ENCODE measurements at regions of chr10 and their contacts with region 1.

Region 1: DNA sequence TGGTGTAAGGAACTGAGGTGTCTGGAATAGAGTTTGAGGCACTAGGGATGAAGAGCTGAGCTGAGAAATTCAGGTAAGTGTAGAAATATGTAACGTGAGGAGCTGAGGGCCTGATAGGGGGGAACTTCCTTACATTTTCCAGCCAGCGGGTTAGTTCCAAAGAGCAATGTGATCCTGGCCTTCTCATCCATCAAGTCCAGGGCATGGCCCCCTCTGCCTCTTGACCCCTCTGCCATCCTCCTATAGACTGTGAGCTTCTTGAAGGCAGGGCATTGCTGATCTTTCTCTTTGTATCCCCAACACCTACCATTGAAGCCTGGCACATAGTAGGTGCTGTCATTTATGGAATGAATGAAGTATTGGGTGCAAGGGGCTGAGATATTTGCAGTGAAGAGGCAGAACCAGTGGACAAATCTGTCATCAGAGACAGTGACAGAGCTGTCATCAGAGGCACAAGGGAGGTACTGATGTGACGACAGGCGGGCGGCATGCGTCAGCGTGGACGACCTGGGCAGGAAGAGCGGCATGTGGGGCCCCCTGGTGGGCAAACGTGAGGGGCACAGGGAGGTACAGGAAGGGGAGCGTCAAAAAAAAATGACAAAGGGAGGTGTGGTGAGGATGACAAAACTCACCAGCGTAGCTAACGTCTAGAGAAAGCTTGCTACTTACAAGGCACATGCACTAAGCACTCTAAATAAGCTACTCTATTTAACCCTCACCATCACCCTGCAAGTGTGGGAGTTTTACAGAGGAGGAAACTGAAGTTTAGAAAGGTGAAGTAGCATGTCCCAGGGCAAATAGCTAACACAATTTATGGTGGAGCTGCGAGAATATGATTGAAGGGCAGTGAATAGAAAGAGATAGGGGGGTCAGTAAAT is 5.2 kb upstream of the CAMK2G start:
- DNase-seq: no peak
- ATAC-seq: peak; percentile 94
- H3K4me3 ChIP-seq: no peak overlapping the region
- H3K27ac ChIP-seq: no peak overlapping the region
- H3K4me1 ChIP-seq: peaks cover 11% of the 10 kb centered on the region
- H3K27me3 ChIP-seq: no peaks in the 10 kb centered on the region
- CTCF ChIP-seq: peak; percentile 95 to 99 (median 97)
- EP300 ChIP-seq: peak in 1 of 2 experiments; percentile 48; a peak in 2 of 4 replicates
- POLR2A ChIP-seq: no peak
- RAD21 ChIP-seq: peak; percentile 91

Region 2: DNA sequence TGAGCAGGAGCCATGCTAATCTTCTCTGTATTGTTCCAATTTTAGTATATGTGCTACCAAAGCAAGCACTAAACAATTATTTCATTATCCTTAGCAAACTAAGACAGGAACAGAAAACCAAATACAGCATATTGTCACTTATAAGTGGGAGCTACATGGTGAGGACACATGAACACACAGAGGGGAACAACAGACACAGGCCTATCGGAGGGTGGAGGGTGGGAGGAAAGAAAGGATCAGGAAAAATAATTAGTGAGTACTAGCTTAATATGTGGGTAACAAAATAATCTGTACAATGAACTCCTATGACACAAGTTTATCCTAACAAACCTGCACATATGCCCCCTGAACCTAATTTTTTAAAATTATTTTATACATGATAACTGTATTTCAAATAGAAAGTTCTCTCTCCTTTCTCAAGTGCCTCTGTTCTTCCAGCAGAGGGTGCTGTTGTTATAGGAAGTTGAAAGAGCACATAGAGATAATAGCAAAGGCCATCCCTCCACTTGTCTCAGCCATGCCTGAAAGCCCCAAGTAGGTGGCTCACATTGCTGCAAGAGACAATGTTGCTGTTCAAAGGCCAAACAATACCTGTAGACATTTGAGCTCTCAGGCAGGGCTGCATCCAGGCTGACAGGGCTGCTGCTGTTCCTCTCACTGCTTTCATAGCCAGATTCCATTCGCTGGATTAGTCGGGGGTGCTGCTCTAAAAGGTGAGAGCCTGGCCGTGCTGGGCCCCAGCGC is 350.3 kb before region 1 on chr10:
- CTCF ChIA-PET with region 1: interaction called, 10 read pairs
- POLR2A ChIA-PET with region 1: no interaction called
- RAD21 ChIA-PET with region 1: interaction called, 8 read pairs
- SMC1A ChIA-PET with region 1: interaction called, 11 read pairs
- in situ Hi-C with region 1: no loop called
- intact Hi-C with region 1: loop called (anchors 5 kb)
- DNase-seq: peak; percentile 20
- ATAC-seq: peak; percentile 100
- H3K4me3 ChIP-seq: no peak overlapping the region
- H3K27ac ChIP-seq: no peak overlapping the region
- H3K4me1 ChIP-seq: no peaks in the 10 kb centered on the region
- H3K27me3 ChIP-seq: no peaks in the 10 kb centered on the region
- CTCF ChIP-seq: peak; percentile 72 to 83 (median 79)
- EP300 ChIP-seq: no peak
- POLR2A ChIP-seq: no peak
- RAD21 ChIP-seq: peak; percentile 97

Region 3: DNA sequence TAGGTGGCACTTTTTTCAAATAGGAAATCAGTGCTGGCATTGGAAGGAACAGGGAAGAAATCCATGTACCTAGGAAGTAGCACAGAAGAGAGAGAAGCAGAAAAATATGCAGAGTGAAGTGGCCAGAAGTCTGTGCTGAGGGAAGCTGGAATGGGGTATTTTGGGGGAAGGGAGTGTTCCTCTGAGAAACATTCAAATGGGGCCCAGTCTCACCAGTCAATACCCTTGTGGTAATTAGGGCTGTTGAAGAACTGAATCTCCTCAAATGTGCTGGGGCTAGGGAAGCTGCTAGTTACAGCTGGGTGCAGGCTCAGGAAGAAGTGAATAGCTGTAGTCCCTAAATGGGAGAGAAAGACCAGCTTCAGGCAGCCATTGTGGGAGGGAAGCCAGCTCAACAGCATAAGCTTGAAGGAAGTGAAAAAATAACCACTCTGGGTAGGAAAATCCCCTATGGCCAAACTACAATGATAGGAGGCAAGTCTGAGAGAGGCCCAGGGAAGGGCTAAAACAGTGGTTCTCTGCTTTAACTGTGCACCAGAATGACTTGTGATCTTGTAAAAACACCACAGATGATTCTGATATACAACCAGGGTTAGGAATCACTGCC is 75.8 kb before region 1 on chr10:
- CTCF ChIA-PET with region 1: interaction called, 5 read pairs
- POLR2A ChIA-PET with region 1: interaction called, 3 read pairs
- RAD21 ChIA-PET with region 1: interaction called, 16 read pairs
- SMC1A ChIA-PET with region 1: interaction called, 14 read pairs
- in situ Hi-C with region 1: no loop called
- intact Hi-C with region 1: no loop called
- DNase-seq: peak; percentile 81
- ATAC-seq: peak; percentile 95
- H3K4me3 ChIP-seq: no peak overlapping the region
- H3K27ac ChIP-seq: peak overlapping the region; percentile 97
- H3K4me1 ChIP-seq: peaks cover 25% of the 10 kb centered on the region
- H3K27me3 ChIP-seq: no peaks in the 10 kb centered on the region
- CTCF ChIP-seq: no peak
- EP300 ChIP-seq: 0 out of 4 replicates have a peak, but pooled peaks of 1 of the 2 experiments have one; percentile 48
- POLR2A ChIP-seq: 0 out of 2 replicates have a peak, but pooled peaks have one; percentile 32
- RAD21 ChIP-seq: no peak

Region 4: DNA sequence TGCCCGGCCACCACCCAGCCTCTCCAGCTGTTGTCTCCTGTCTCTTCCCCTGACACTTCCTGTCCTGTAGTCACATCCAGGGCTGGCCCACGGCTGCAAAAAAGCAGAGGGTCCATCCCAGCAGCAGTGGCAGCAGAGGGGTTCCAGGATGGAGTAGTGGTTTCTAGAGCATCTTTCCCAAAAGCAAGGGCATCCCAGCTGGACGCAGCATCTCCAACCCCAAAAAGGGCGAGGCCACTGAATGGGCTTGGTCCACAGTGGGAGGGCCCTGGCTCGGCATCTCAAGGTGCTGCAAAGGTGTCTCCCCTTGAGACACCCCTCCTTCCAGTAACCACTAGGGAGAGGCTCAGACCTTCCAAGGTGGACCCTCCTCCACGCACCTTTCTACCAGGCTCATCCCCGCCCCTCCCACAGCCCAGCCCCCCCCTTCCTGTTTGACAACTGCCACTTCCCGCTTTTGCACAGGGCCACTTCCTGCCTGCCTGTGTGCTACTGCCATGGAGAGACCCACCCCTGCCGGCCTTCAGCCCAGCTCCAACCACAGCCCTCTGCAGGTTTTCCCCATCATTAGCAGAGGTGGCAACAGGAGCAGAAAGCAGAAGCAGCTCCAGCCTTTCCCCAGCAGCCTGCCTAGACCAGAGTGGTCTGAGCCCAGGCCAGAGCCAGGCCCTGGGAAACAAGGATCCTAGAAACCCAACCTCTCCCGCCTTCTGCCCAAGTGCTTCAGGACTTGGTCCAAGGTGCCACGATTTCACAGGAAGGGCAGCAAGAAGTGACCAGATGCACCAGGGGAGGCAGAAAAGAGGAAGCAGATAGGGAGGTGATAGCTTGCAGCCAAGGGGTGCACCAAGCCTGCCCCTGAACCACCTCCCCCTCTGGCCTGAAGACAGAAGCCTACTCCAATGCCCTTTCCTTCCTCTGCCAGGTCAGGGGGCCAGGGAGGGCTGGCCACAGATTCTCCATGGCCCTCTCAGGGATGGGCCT is 13.8 kb before region 1 on chr10:
- CTCF ChIA-PET with region 1: interaction called, 58 read pairs
- POLR2A ChIA-PET with region 1: interaction called, 17 read pairs
- RAD21 ChIA-PET with region 1: interaction called, 149 read pairs
- SMC1A ChIA-PET with region 1: interaction called, 58 read pairs
- in situ Hi-C with region 1: no loop called
- intact Hi-C with region 1: no loop called
- DNase-seq: no peak
- ATAC-seq: peak; percentile 95
- H3K4me3 ChIP-seq: peak overlapping the region; percentile 58; the same call in 1 of the 2 replicates
- H3K27ac ChIP-seq: peak overlapping the region; percentile 84
- H3K4me1 ChIP-seq: peaks cover 24% of the 10 kb centered on the region
- H3K27me3 ChIP-seq: no peaks in the 10 kb centered on the region
- CTCF ChIP-seq: peak in 1 of 3 experiments; percentile 14; a peak in 1 of 6 replicates
- EP300 ChIP-seq: 0 out of 4 replicates have a peak, but pooled peaks of 1 of the 2 experiments have one; percentile 33
- POLR2A ChIP-seq: no peak
- RAD21 ChIP-seq: no peak

Region 5: GRCh38 chr10:73920089-73920488 is 40.6 kb after region 1 on chr10:
- CTCF ChIA-PET with region 1: interaction called, 11 read pairs
- POLR2A ChIA-PET with region 1: no interaction called
- RAD21 ChIA-PET with region 1: interaction called, 3 read pairs
- SMC1A ChIA-PET with region 1: interaction called, 1,048 read pairs
- in situ Hi-C with region 1: no loop called
- intact Hi-C with region 1: no loop called
- DNase-seq: no peak
- ATAC-seq: peak; percentile 85
- H3K4me3 ChIP-seq: no peak overlapping the region
- H3K27ac ChIP-seq: no peak overlapping the region
- H3K4me1 ChIP-seq: peaks cover 6% of the 10 kb centered on the region; the same call in 1 of the 2 replicates
- H3K27me3 ChIP-seq: no peaks in the 10 kb centered on the region
- CTCF ChIP-seq: no peak
- EP300 ChIP-seq: no peak
- POLR2A ChIP-seq: no peak
- RAD21 ChIP-seq: no peak

Region 6: GRCh38 chr10:74103560-74104248 is 224.2 kb after region 1 on chr10:
- CTCF ChIA-PET with region 1: interaction called, 185 read pairs
- POLR2A ChIA-PET with region 1: no interaction called
- RAD21 ChIA-PET with region 1: interaction called, 8 read pairs
- SMC1A ChIA-PET with region 1: no interaction called
- in situ Hi-C with region 1: loop called (anchors 25 kb)
- intact Hi-C with region 1: no loop called
- DNase-seq: no peak
- ATAC-seq: peak; percentile 85
- H3K4me3 ChIP-seq: no peak overlapping the region
- H3K27ac ChIP-seq: no peak overlapping the region
- H3K4me1 ChIP-seq: no peaks in the 10 kb centered on the region
- H3K27me3 ChIP-seq: no peaks in the 10 kb centered on the region
- CTCF ChIP-seq: peak; percentile 52 to 71 (median 67)
- EP300 ChIP-seq: no peak
- POLR2A ChIP-seq: no peak
- RAD21 ChIP-seq: peak; percentile 84

Region 7: GRCh38 chr10:74306227-74306982 is 426.9 kb after region 1 on chr10:
- CTCF ChIA-PET with region 1: no interaction called
- POLR2A ChIA-PET with region 1: no interaction called
- RAD21 ChIA-PET with region 1: no interaction called
- SMC1A ChIA-PET with region 1: no interaction called
- in situ Hi-C with region 1: no loop called
- intact Hi-C with region 1: no loop called
- DNase-seq: no peak
- ATAC-seq: peak; percentile 56
- H3K4me3 ChIP-seq: no peak overlapping the region
- H3K27ac ChIP-seq: peak overlapping the region; percentile 58
- H3K4me1 ChIP-seq: peaks cover 21% of the 10 kb centered on the region
- H3K27me3 ChIP-seq: no peaks in the 10 kb centered on the region
- CTCF ChIP-seq: no peak
- EP300 ChIP-seq: no peak
- POLR2A ChIP-seq: no peak
- RAD21 ChIP-seq: no peak

Measured in GM12878 (cell line).